Endothelial cell of umbilical vein (primary cell): ENCODE measurements at regions of chr16 and their contacts with region 1.

Region 1: DNA sequence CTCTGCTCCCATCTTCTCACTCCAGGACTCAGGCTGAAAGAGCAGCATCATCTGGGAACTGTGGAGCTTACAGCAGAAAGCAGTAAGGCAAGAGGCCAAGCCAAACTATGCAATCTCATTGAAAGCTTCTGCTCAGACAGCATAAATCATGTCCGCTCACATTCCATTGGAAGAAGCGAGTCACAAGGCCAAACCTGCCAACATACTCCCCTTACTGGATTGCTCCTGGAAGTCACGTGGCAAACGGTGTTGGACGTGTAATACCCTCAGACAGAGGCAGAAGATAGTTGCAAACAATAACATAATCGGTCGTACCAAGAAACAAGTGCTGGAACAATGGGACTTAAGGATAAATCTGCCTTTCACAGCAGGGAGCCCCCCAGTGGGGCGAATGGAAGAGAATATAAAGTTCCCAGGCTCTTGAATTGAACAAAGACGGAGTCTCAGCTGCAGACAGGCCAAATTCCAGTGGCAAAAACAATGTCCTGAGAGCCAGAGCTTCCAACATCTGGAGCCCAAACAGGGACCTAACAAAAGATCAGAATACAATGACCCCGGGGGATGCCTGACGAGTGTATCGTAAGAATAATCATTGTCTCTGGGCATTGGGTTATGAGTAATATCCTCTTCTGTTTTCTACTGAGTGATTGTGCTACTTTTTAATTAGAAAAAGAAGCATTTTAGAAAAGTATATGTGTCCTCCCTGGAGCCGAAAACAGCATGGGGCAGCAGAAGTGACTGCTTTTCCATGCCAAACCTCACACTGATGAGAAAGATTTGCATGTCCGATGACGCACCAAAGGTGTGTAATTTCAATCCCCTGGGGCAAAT is 68.4 kb downstream of the CMC2 start:
- DNase-seq: peak; percentile 98
- H3K4me3 ChIP-seq: peak overlapping the region in 2 of 3 experiments; percentile 16 to 27
- H3K27ac ChIP-seq: peak overlapping the region; percentile 98
- H3K4me1 ChIP-seq: peaks cover 45% of the 10 kb centered on the region
- H3K27me3 ChIP-seq: no peaks in the 10 kb centered on the region
- CTCF ChIP-seq: no peak
- POLR2A ChIP-seq: peak; percentile 86

Region 2: DNA sequence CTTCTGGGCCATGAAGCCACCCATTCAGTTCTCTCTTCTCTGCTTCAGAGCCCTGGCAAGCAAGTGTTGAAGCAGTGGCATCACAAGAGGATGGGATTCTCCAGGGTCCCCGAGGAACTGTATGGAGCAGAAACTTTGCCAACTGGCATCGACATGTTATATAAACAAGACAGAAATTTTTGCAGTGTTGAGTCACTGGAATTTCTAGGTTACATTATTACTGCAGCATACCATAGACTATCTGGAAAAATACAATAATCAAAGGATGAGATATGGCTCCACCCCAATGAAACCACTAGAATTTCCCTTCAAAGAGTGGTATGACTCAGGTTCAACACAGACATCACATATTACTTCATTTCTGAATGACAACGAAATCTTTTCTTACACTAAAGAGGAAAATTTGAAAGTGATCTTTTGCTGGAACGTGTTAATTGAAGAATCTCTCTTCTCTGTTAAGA is 740.5 kb before region 1 on chr16:
- CTCF ChIA-PET with region 1: no interaction called
- POLR2A ChIA-PET with region 1: no interaction called
- dilution Hi-C with region 1: no loop called
- intact Hi-C with region 1: loop called (anchors 5 kb)
- DNase-seq: peak; percentile 91
- H3K4me3 ChIP-seq: no peak overlapping the region
- H3K27ac ChIP-seq: peak overlapping the region; percentile 93
- H3K4me1 ChIP-seq: peaks cover 18% of the 10 kb centered on the region
- H3K27me3 ChIP-seq: no peaks in the 10 kb centered on the region
- CTCF ChIP-seq: no peak
- POLR2A ChIP-seq: peak; percentile 48

Region 3: DNA sequence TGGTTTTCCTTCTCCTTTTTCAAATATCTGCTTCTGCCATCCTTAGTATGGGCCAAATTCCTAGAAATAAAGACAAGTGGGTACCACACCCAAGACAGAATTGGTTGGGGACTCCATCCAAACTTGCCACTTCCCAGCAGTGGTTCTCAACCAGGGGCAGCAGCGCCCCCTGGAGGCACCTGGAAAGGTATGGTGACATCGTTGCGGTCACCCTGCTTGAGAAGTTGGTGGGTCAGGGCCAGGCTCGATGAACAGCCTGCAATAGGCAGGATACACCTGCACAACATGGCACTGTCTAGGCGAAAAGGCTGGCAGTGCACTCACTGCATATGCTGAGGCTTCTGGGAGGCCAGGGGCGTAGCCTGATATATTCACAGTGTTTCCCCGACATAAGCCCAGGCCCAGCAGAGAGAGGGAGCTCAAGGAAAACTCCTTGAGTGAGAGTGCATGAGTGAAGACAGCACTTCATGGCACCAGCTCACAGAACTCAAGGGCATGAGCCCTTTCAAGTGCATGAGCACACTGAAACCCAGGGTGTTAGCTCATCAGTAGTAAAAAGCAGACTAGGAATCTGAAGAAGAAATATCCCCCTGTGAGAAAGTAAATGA is 10.7 kb after region 1 on chr16:
- CTCF ChIA-PET with region 1: interaction called, 30 read pairs
- POLR2A ChIA-PET with region 1: interaction called, 4 read pairs
- dilution Hi-C with region 1: no loop called
- intact Hi-C with region 1: loop called (anchors 1 kb)
- DNase-seq: peak; percentile 73
- H3K4me3 ChIP-seq: no peak overlapping the region
- H3K27ac ChIP-seq: peak overlapping the region; percentile 54
- H3K4me1 ChIP-seq: peaks cover 8% of the 10 kb centered on the region
- H3K27me3 ChIP-seq: no peaks in the 10 kb centered on the region
- CTCF ChIP-seq: peak; percentile 82 to 83
- POLR2A ChIP-seq: no peak

Region 4: GRCh38 chr16:81006814-81007696 is 68.8 kb after region 1 on chr16 and contains the starts of genes CENPN and CMC2:
- CTCF ChIA-PET with region 1: interaction called, 7 read pairs
- POLR2A ChIA-PET with region 1: interaction called, 7 read pairs
- dilution Hi-C with region 1: no loop called
- intact Hi-C with region 1: loop called (anchors 1 kb)
- DNase-seq: peak; percentile 99
- H3K4me3 ChIP-seq: peak within 1 kb of the TSS; percentile 72 to 87 (median 83)
- H3K27ac ChIP-seq: peak within 1 kb of the TSS; percentile 80
- H3K4me1 ChIP-seq: peaks cover 19% of the 10 kb centered on the region
- H3K27me3 ChIP-seq: no peaks in the 10 kb centered on the region
- CTCF ChIP-seq: peak in 1 of 2 donors; percentile 1
- POLR2A ChIP-seq: peak; percentile 84
- total RNA-seq, gene CENPN: 52.4 and 53.4 TPM in 2 replicates
- total RNA-seq, gene CMC2: 96.6 and 97.8 TPM in 2 replicates

Region 5: DNA sequence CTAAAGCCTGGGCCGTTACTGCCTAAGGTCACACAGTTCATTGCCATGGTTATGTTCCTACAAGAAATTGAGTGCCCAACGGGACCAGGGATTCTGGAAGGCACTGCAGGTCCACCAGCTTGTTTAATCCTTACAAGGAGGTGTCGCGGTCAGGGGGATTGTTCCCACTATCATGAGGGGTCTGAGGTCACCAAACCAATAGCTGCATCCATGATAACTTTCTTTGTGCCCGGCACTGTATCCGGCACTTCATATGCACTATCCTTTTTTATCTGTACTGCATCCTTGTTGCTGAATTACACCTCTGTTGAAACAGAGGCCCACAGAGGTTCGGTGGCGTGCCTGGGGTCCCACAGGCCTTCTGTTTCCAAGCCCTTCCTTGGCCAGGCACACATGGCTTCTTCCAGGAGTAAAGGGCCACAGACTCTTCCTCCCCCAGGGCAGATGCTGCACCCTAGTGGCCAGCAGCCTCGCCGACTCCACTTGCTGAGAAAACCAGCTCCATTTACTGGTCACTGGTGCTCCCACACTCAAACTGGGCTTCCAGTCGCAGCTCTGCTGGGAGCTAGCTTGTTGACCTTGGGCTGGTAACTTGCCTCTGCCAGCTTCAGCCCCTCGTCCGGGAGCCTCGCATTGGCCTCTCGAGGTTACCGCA is 758.8 kb after region 1 on chr16:
- CTCF ChIA-PET with region 1: no interaction called
- POLR2A ChIA-PET with region 1: no interaction called
- dilution Hi-C with region 1: no loop called
- intact Hi-C with region 1: loop called (anchors 5 kb)
- DNase-seq: peak; percentile 79
- H3K4me3 ChIP-seq: no peak overlapping the region
- H3K27ac ChIP-seq: peak overlapping the region; percentile 98
- H3K4me1 ChIP-seq: peaks cover 62% of the 10 kb centered on the region
- H3K27me3 ChIP-seq: no peaks in the 10 kb centered on the region
- CTCF ChIP-seq: peak; percentile 79 to 84
- POLR2A ChIP-seq: no peak